ENCODE measurements at regions of chr6 and their contacts with region 1.

Region 1: GRCh38 chr6:118725944-118726343 is 74.6 kb upstream of the CEP85L start:
- DNase-seq: peak; percentile 93
- H3K4me3 Mint-ChIP-seq: peak overlapping the region; percentile 26
- H3K27ac Mint-ChIP-seq: peak overlapping the region; percentile 91
- H3K4me1 Mint-ChIP-seq: peaks cover 55% of the 10 kb centered on the region
- H3K27me3 Mint-ChIP-seq: no peaks in the 10 kb centered on the region

Region 2: GRCh38 chr6:117711369-117711768 is 1014.6 kb before region 1 on chr6:
- CTCF ChIA-PET with region 1: no interaction called
- intact Hi-C with region 1: no loop called
- DNase-seq: peak; percentile 12
- H3K4me3 Mint-ChIP-seq: no peak overlapping the region
- H3K27ac Mint-ChIP-seq: no peak overlapping the region
- H3K4me1 Mint-ChIP-seq: no peaks in the 10 kb centered on the region
- H3K27me3 Mint-ChIP-seq: no peaks in the 10 kb centered on the region

Region 3: DNA sequence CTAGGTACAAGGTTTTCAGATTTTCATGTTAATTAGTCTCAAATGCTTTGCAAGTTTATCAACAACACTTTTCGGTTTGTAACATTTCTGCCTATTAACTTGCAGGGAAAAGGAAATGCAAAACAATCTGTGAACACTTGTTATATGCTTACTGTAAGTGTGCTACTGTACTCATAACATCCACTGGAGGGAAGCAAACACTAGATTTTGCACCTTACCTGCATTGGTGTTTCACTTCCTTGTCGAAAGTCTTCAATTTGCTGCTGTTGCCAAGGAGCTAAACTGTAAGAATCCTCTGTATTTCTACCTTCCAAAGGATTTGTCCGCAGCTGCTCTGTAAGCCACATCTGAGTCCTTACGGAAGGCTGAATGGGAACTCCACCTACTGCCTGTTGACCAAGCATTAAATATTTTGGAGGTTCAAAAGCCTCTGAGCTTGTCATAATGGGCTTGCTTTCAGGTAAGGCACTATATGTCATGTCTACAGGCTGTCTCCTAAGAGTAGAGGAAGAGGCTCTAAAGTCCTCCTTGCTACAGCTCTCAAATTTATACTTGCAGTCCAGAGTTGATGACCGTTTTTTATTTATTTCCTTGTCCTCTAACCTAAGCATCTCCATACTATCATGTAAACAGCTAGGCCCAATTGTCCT is 160.5 kb before region 1 on chr6:
- CTCF ChIA-PET with region 1: interaction called, 5 read pairs
- intact Hi-C with region 1: loop called (anchors 2 kb)
- DNase-seq: peak; percentile 26
- H3K4me3 Mint-ChIP-seq: no peak overlapping the region
- H3K27ac Mint-ChIP-seq: peak overlapping the region; percentile 12
- H3K4me1 Mint-ChIP-seq: peaks cover 28% of the 10 kb centered on the region
- H3K27me3 Mint-ChIP-seq: no peaks in the 10 kb centered on the region

Region 4: DNA sequence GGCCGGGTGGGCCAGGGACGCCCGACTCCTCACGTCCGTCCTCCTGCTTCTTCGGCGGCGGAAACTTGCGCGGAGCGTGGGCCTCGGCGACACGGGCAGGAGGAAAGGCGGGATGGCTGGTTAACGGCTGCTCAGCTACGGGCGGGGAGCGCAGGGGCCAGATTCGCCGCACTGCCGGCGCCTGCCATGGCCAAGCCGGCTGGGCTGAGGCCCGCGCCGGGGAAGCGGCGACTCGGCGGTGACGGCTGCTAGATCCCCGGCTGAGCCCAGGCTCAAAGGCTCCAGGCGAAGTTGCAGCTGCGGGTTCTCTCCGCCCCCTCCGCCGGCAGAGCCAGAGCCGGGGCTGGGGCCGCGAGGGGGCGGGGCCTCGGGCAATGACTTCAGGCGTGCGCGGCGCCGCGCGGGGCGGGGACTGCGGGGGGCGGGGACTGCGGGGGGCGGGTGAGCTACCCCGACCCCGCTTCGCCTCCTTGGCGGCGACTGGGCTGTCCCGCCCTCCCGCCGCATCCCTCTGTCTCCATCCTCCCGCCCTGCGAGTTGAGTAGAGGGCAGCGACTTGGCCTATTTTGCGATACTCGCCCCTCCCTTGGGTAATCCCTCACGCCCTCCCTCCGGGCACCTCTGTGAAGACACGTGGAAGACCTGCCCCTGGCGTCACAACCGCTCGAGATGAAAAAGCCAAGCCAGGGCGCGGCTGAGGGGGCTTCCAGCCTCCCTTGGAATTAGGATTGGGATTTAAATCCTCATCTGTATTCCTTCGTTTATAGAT is 74.5 kb before region 1 on chr6 and contains the start of gene CEP85L:
- CTCF ChIA-PET with region 1: no interaction called
- intact Hi-C with region 1: loop called (anchors 1 kb)
- DNase-seq: peak; percentile 90
- H3K4me3 Mint-ChIP-seq: peak within 1 kb of the TSS; percentile 86
- H3K27ac Mint-ChIP-seq: peak within 1 kb of the TSS; percentile 89
- H3K4me1 Mint-ChIP-seq: peaks cover 49% of the 10 kb centered on the region
- H3K27me3 Mint-ChIP-seq: no peaks in the 10 kb centered on the region
- total RNA-seq, gene CEP85L: 31.4 to 31.9 TPM

Region 5: GRCh38 chr6:118660218-118660569 is 65.8 kb before region 1 on chr6:
- CTCF ChIA-PET with region 1: no interaction called
- intact Hi-C with region 1: loop called (anchors 1 kb)
- DNase-seq: peak; percentile 65
- H3K4me3 Mint-ChIP-seq: peak overlapping the region; percentile 44
- H3K27ac Mint-ChIP-seq: peak overlapping the region; percentile 84
- H3K4me1 Mint-ChIP-seq: peaks cover 69% of the 10 kb centered on the region
- H3K27me3 Mint-ChIP-seq: no peaks in the 10 kb centered on the region

Region 6: GRCh38 chr6:118679327-118679901 is 46.5 kb before region 1 on chr6:
- CTCF ChIA-PET with region 1: interaction called, 6 read pairs
- intact Hi-C with region 1: loop called (anchors 1 kb)
- DNase-seq: no peak
- H3K4me3 Mint-ChIP-seq: no peak overlapping the region
- H3K27ac Mint-ChIP-seq: peak overlapping the region; percentile 14
- H3K4me1 Mint-ChIP-seq: peaks cover 60% of the 10 kb centered on the region
- H3K27me3 Mint-ChIP-seq: no peaks in the 10 kb centered on the region

Region 7: GRCh38 chr6:118768904-118769325 is 43.0 kb after region 1 on chr6:
- CTCF ChIA-PET with region 1: interaction called, 3 read pairs
- intact Hi-C with region 1: loop called (anchors 1 kb)
- DNase-seq: peak; percentile 69
- H3K4me3 Mint-ChIP-seq: peak overlapping the region; percentile 30
- H3K27ac Mint-ChIP-seq: peak overlapping the region; percentile 77
- H3K4me1 Mint-ChIP-seq: peaks cover 31% of the 10 kb centered on the region
- H3K27me3 Mint-ChIP-seq: no peaks in the 10 kb centered on the region